Activated CD4-positive, alpha-beta T cell treated with anti-CD3 and anti-CD28 coated beads, Interleukin-2, amount 10 ng/mL, durations not matched to agents 24 days and 14 days (primary cell): ENCODE measurements at regions of chr9 and their contacts with region 1.

Region 1: GRCh38 chr9:36995927-36996705 is 38.0 kb downstream of the PAX5 start:
- DNase-seq: peak; percentile 87
- H3K4me3 Mint-ChIP-seq: peak overlapping the region; percentile 57
- H3K27ac Mint-ChIP-seq: no peak overlapping the region
- H3K4me1 Mint-ChIP-seq: peaks cover 3% of the 10 kb centered on the region
- H3K27me3 Mint-ChIP-seq: peaks cover 20% of the 10 kb centered on the region

Region 2: DNA sequence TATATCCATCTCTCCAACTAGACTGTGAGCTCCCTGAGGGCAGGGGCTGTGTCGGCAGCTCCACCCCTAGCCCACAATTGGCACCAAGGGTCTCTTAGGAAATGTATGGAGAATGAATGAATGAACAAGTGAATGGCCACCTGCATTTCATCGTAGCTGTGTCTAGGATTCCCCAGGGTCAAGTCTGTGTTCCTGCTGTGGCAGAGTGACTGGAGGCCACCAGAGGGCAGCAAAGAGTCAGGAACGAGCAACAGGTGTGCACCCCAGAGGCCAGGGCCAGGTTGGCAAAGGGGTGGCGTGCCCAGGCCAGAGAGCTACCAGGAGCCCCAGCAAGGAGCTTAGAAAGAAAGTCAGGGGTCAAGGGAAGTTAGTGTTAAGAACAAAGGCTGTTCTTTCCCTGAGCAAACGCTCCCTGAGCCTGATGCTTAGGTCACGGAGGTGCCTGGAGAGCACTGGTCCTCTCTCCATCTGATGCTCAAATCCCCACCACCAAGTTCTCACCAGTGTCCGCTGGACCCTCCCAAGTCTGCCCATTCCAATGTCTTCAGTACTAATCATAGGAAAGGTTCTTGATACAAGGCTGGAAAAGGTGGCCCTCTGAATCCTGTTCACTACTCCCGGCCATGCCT is 122.8 kb before region 1 on chr9:
- intact Hi-C with region 1: loop called (anchors 1 kb)
- DNase-seq: peak; percentile 90
- H3K4me3 Mint-ChIP-seq: no peak overlapping the region
- H3K27ac Mint-ChIP-seq: no peak overlapping the region
- H3K4me1 Mint-ChIP-seq: peaks cover 4% of the 10 kb centered on the region
- H3K27me3 Mint-ChIP-seq: peaks cover 12% of the 10 kb centered on the region

Region 3: DNA sequence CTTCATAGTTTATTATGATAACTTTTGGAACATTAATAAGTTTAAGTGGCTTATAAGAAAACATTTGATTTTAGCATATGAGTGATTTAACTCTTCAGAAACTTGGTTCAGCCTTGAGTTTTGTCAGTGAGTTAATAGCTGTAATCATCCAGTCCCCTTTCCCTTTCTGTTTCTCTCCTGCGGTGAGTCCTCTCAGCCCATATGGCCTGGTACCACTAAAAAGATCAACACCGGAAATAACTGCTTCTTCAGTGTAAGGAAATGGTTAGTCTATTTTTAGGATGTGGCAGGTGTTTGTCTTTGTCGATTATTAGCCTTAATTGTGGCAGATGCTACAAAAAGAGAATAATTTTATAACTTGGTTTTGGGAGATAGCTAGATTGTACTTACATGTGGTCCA is 306.2 kb after region 1 on chr9:
- intact Hi-C with region 1: no loop called
- DNase-seq: peak; percentile 85
- H3K4me3 Mint-ChIP-seq: peak overlapping the region; percentile 74
- H3K27ac Mint-ChIP-seq: peak overlapping the region; percentile 88
- H3K4me1 Mint-ChIP-seq: peaks cover 43% of the 10 kb centered on the region
- H3K27me3 Mint-ChIP-seq: no peaks in the 10 kb centered on the region

Region 4: GRCh38 chr9:37329576-37329975 is 333.5 kb after region 1 on chr9:
- intact Hi-C with region 1: loop called (anchors 5 kb)
- DNase-seq: peak; percentile 62
- H3K4me3 Mint-ChIP-seq: no peak overlapping the region
- H3K27ac Mint-ChIP-seq: no peak overlapping the region
- H3K4me1 Mint-ChIP-seq: no peaks in the 10 kb centered on the region
- H3K27me3 Mint-ChIP-seq: no peaks in the 10 kb centered on the region

Region 5: GRCh38 chr9:37390759-37391158 is 394.6 kb after region 1 on chr9:
- intact Hi-C with region 1: loop called (anchors 5 kb)
- DNase-seq: peak; percentile 80
- H3K4me3 Mint-ChIP-seq: no peak overlapping the region
- H3K27ac Mint-ChIP-seq: no peak overlapping the region
- H3K4me1 Mint-ChIP-seq: no peaks in the 10 kb centered on the region
- H3K27me3 Mint-ChIP-seq: no peaks in the 10 kb centered on the region